Endothelial cell of umbilical vein (primary cell): ENCODE measurements at regions of chr3 and their contacts with region 1.

Region 1: GRCh38 chr3:87792534-87793336 is 266.1 kb downstream of the CGGBP1 start:
- DNase-seq: no peak
- H3K4me3 ChIP-seq: peak within 1 kb of the TSS in 2 of 3 experiments; percentile 4 to 24
- H3K27ac ChIP-seq: no peak within 1 kb of the TSS
- H3K4me1 ChIP-seq: no peaks in the 10 kb centered on the region
- H3K27me3 ChIP-seq: peaks cover 21 to 36% of the 10 kb centered on the region in 2 experiments
- CTCF ChIP-seq: no peak
- POLR2A ChIP-seq: no peak

Region 2: GRCh38 chr3:87993566-87993965 is 200.8 kb after region 1 on chr3:
- CTCF ChIA-PET with region 1: no interaction called
- POLR2A ChIA-PET with region 1: no interaction called
- dilution Hi-C with region 1: no loop called
- intact Hi-C with region 1: loop called (anchors 5 kb)
- DNase-seq: no peak
- H3K4me3 ChIP-seq: no peak overlapping the region
- H3K27ac ChIP-seq: no peak overlapping the region
- H3K4me1 ChIP-seq: peaks cover 6% of the 10 kb centered on the region
- H3K27me3 ChIP-seq: no peaks in the 10 kb centered on the region
- CTCF ChIP-seq: no peak
- POLR2A ChIP-seq: no peak